ENCODE measurements at regions of chr13 and their contacts with region 1.

Region 1: DNA sequence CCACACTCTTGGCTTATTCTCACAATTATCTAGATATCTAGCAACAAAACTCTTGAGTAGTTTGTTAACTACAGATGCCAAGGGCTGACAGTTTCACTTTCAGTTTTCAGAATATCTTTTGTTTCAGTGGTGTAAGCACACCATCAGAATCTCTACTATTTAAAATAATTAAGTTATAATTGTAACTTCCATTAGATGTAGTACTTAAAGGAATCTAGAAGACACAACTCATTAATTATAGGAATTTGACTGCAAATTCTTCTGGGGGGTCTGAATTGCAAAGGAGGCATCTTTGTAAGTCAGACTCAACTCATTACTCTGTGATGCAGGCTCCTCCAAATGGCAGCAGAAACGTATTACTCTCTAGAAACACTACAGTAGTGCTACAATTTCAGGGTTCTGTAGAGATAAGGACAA is 44.9 kb upstream of the USPL1 start:
- DNase-seq: peak in 4 of 9 experiments; percentile 12 to 72 (median 40)
- ATAC-seq: peak; percentile 57
- H3K4me3 ChIP-seq: peak overlapping the region; percentile 23 to 51
- H3K4me3 Mint-ChIP-seq: peak overlapping the region; percentile 75
- H3K27ac ChIP-seq: peak overlapping the region; percentile 58 to 72
- H3K27ac Mint-ChIP-seq: peak overlapping the region; percentile 91
- H3K4me1 ChIP-seq: peaks cover 27% of the 10 kb centered on the region
- H3K4me1 Mint-ChIP-seq: peaks cover 32% of the 10 kb centered on the region
- H3K27me3 ChIP-seq: no peaks in the 10 kb centered on the region
- H3K27me3 Mint-ChIP-seq: no peaks in the 10 kb centered on the region
- CTCF ChIP-seq: peak; percentile 44

Region 2: GRCh38 chr13:29589234-29589633 is 983.6 kb before region 1 on chr13:
- CTCF ChIA-PET with region 1: no interaction called
- POLR2A ChIA-PET with region 1: no interaction called
- intact Hi-C with region 1: loop called in 1 of 2 experiments (anchors 5 kb)
- DNase-seq: no peak
- ATAC-seq: no peak
- H3K4me3 ChIP-seq: no peak overlapping the region
- H3K4me3 Mint-ChIP-seq: no peak overlapping the region
- H3K27ac ChIP-seq: no peak overlapping the region
- H3K27ac Mint-ChIP-seq: no peak overlapping the region
- H3K4me1 ChIP-seq: peaks cover 7% of the 10 kb centered on the region
- H3K4me1 Mint-ChIP-seq: peaks cover 54% of the 10 kb centered on the region
- H3K27me3 ChIP-seq: no peaks in the 10 kb centered on the region
- H3K27me3 Mint-ChIP-seq: no peaks in the 10 kb centered on the region
- CTCF ChIP-seq: no peak

Region 3: GRCh38 chr13:30257468-30258099 is 315.3 kb before region 1 on chr13:
- CTCF ChIA-PET with region 1: interaction called, 3 read pairs
- POLR2A ChIA-PET with region 1: no interaction called
- intact Hi-C with region 1: loop called in 1 of 2 experiments (anchors 10 kb)
- DNase-seq: no peak
- ATAC-seq: no peak
- H3K4me3 ChIP-seq: no peak overlapping the region
- H3K4me3 Mint-ChIP-seq: no peak overlapping the region
- H3K27ac ChIP-seq: no peak overlapping the region
- H3K27ac Mint-ChIP-seq: peak overlapping the region; percentile 20
- H3K4me1 ChIP-seq: no peaks in the 10 kb centered on the region
- H3K4me1 Mint-ChIP-seq: peaks cover 16% of the 10 kb centered on the region
- H3K27me3 ChIP-seq: no peaks in the 10 kb centered on the region
- H3K27me3 Mint-ChIP-seq: no peaks in the 10 kb centered on the region
- CTCF ChIP-seq: no peak

Measured in CD8-positive, alpha-beta T cell (primary cell).